ENCODE measurements at regions of chr9 and their contacts with region 1.

Region 1: DNA sequence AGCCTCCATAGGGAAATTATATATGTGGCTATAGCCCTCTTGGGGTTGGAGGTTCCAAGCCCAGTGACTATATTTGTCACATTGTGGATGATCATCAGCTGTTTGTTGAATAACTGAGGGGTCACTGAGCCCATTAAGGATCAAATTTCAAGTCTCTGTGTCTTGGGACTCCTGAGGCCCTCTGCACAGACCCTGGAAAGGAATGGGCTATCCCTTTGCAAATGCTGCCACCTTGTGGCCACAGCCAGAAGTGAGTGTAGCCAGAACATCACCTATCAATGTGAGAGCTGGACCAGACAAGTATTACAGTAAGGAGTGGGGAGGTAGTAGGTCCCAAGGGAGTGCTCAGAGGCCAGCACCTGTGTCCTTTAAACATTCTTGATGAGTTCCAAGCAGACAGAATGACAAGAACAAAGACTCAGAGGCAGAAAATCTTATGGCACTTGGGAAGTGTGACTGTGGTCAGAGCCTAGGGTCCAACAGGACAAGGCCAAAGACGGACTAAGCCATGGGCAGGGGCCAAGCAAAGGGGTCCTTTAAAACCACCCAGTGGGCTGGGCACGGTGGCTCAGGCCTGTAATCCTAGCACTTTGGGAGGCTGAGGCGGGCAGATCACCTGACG is 8.2 kb downstream of the RPP25L start:
- DNase-seq: peak; percentile 96
- ATAC-seq: peak; percentile 93
- H3K4me3 Mint-ChIP-seq: no peak overlapping the region
- H3K27ac Mint-ChIP-seq: no peak overlapping the region
- H3K4me1 Mint-ChIP-seq: peaks cover 9% of the 10 kb centered on the region
- H3K27me3 Mint-ChIP-seq: no peaks in the 10 kb centered on the region; the same call in 1 of the 2 replicates
- CTCF ChIP-seq: peak; percentile 94

Region 2: GRCh38 chr9:34430843-34431437 is 172.8 kb before region 1 on chr9:
- CTCF ChIA-PET with region 1: interaction called, 17 read pairs
- POLR2A ChIA-PET with region 1: no interaction called
- DNase-seq: peak; percentile 65
- ATAC-seq: peak; percentile 92
- H3K4me3 Mint-ChIP-seq: no peak overlapping the region
- H3K27ac Mint-ChIP-seq: no peak overlapping the region
- H3K4me1 Mint-ChIP-seq: peaks cover 9% of the 10 kb centered on the region
- H3K27me3 Mint-ChIP-seq: no peaks in the 10 kb centered on the region
- CTCF ChIP-seq: no peak

Region 3: DNA sequence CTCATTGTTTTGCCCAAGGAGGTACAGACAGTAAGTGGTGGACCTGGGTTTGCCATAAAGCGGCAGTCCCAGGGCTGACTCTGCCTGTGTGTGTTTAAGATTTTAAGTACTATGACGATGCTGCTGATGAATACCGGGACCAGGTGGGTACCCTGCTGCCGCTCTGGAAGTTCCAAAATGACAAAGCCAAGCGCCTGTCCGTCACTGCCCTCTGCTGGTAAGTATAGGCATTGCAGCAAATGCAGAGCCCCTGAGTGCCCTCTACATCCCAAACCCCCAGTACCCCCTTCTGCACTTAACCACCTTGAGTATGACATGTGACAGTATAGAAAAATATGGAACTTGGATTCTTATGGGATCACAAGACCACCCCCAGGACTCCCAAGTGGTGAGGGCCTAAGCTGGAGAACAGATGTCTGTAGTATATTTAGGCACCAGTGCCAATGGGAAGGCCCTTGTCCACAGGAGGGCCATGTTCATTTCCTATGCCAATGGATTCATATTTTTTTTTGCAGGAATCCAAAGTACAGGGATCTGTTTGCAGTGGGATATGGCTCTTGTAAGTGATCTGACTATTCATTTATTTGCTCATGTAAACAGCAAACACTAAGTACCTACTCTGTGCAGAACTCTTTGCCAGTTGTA is 103.0 kb before region 1 on chr9:
- CTCF ChIA-PET with region 1: interaction called, 41 read pairs
- POLR2A ChIA-PET with region 1: no interaction called
- DNase-seq: peak; percentile 83
- ATAC-seq: peak; percentile 80
- H3K4me3 Mint-ChIP-seq: no peak overlapping the region
- H3K27ac Mint-ChIP-seq: no peak overlapping the region
- H3K4me1 Mint-ChIP-seq: peaks cover 12% of the 10 kb centered on the region
- H3K27me3 Mint-ChIP-seq: peaks cover 4% of the 10 kb centered on the region; the same call in 1 of the 2 replicates
- CTCF ChIP-seq: peak; percentile 98

Region 4: GRCh38 chr9:34546834-34547827 is 56.6 kb before region 1 on chr9:
- CTCF ChIA-PET with region 1: interaction called, 83 read pairs
- POLR2A ChIA-PET with region 1: no interaction called
- DNase-seq: peak; percentile 91
- ATAC-seq: peak; percentile 75
- H3K4me3 Mint-ChIP-seq: no peak overlapping the region
- H3K27ac Mint-ChIP-seq: no peak overlapping the region; the same call in 1 of the 2 replicates
- H3K4me1 Mint-ChIP-seq: peaks cover 2% of the 10 kb centered on the region; the same call in 1 of the 2 replicates
- H3K27me3 Mint-ChIP-seq: no peaks in the 10 kb centered on the region; the same call in 1 of the 2 replicates
- CTCF ChIP-seq: peak; percentile 93

Region 5: GRCh38 chr9:34570376-34570775 is 33.3 kb before region 1 on chr9:
- CTCF ChIA-PET with region 1: interaction called, 11 read pairs
- POLR2A ChIA-PET with region 1: no interaction called
- DNase-seq: no peak
- ATAC-seq: no peak
- H3K4me3 Mint-ChIP-seq: no peak overlapping the region
- H3K27ac Mint-ChIP-seq: 0 out of 2 replicates have a peak overlapping the region, but pooled peaks have one; percentile 13
- H3K4me1 Mint-ChIP-seq: peaks cover 27% of the 10 kb centered on the region
- H3K27me3 Mint-ChIP-seq: peaks cover 2% of the 10 kb centered on the region; the same call in 1 of the 2 replicates
- CTCF ChIP-seq: no peak

Region 6: GRCh38 chr9:34620061-34620994 is 16.6 kb after region 1 on chr9 and contains the start of gene DCTN3:
- CTCF ChIA-PET with region 1: interaction called, 16 read pairs
- POLR2A ChIA-PET with region 1: no interaction called
- DNase-seq: peak; percentile 88
- ATAC-seq: peak; percentile 92
- H3K4me3 Mint-ChIP-seq: peak within 1 kb of the TSS; percentile 86
- H3K27ac Mint-ChIP-seq: no peak within 1 kb of the TSS
- H3K4me1 Mint-ChIP-seq: peaks cover 10% of the 10 kb centered on the region
- H3K27me3 Mint-ChIP-seq: peaks cover 55% of the 10 kb centered on the region
- CTCF ChIP-seq: no peak
- total RNA-seq, gene DCTN3: 23.8 to 28.7 TPM (median 27.5 TPM) in 3 replicates

Region 7: GRCh38 chr9:34694811-34695210 is 91.1 kb after region 1 on chr9:
- CTCF ChIA-PET with region 1: no interaction called
- POLR2A ChIA-PET with region 1: no interaction called
- DNase-seq: no peak
- ATAC-seq: no peak
- H3K4me3 Mint-ChIP-seq: no peak overlapping the region
- H3K27ac Mint-ChIP-seq: no peak overlapping the region
- H3K4me1 Mint-ChIP-seq: 0 out of 2 replicates have a peak, but pooled peaks cover 4% of the 10 kb centered on the region
- H3K27me3 Mint-ChIP-seq: peaks cover 29% of the 10 kb centered on the region
- CTCF ChIP-seq: no peak

Region 8: DNA sequence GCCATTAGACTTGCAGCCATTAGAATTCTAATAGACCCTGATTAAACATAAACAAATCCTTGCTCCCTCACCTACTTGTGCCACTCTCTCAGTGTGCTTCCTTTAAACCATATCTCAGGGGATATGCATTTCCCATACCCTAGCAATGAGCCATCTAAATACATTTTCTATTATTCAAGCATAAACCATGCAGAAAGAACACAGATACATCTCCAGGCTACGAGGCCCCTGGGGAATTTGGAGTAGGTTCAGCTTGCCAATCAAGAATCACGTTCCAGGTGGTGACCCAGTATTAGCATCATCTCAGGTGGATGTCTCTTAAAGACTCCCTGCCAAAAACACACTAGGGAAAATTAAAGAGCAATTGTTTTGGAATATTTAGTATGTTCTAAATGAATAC is 199.2 kb after region 1 on chr9:
- CTCF ChIA-PET with region 1: no interaction called
- POLR2A ChIA-PET with region 1: no interaction called
- DNase-seq: no peak
- ATAC-seq: no peak
- H3K4me3 Mint-ChIP-seq: no peak overlapping the region
- H3K27ac Mint-ChIP-seq: no peak overlapping the region
- H3K4me1 Mint-ChIP-seq: peaks cover 3% of the 10 kb centered on the region; the same call in 1 of the 2 replicates
- H3K27me3 Mint-ChIP-seq: peaks cover 42% of the 10 kb centered on the region
- CTCF ChIP-seq: no peak

Measured in WTC11 (cell line).